GM12878 (cell line): ENCODE measurements at regions of chr4 and their contacts with region 1.

Region 1: DNA sequence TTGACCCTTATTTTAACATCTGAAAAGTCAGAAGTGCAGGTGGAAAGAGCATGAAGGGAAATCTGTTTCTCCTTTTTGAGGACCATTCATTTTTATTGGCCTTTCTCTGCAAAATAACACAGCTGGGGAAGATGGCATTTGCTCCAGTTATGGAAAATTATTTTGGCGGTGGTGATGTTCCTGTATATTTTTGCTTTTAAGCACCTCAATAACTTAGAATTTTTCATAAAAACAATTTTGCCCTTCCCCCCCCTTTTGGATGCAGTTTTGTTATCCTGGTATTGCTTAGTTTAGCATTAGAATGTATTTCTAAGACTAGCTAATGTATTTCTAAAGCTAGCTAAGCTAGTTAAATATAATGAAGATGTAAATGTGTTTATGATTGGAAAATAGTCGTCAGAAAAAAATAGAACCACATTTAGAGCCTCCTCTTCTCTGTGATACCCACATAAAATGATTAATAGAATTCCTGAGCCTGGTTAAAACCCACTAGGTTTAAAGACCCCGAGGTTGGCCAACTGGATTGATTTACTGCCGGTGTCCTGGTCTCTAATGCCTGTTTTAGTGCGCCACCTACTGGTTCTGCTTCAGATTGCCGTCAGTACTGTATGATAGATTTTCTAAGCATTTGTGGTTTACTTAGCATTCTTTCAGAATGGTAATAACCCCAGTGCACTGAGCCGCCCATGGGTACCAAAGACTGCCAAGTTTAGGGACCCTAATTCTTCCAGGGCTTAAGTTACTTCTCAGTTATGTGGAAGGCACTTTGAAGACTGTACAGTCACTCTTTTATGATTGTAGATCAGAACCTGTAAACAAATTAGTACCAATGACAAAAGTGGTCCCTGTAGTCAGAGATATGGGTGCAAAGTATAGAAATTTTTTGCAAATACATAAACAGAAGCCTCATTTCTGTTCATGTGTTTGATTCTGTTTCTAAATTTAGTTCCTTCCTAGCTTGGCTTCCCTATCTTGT is 11.4 kb downstream of the KLF3 start:
- DNase-seq: no peak
- ATAC-seq: peak; percentile 81
- H3K4me3 ChIP-seq: no peak overlapping the region
- H3K27ac ChIP-seq: no peak overlapping the region
- H3K4me1 ChIP-seq: peaks cover 47% of the 10 kb centered on the region
- H3K27me3 ChIP-seq: no peaks in the 10 kb centered on the region; a peak in 1 of 4 replicates
- CTCF ChIP-seq: peak; percentile 80 to 96 (median 89)
- EP300 ChIP-seq: peak in 1 of 2 experiments; percentile 36; a peak in 1 of 4 replicates
- POLR2A ChIP-seq: no peak
- RAD21 ChIP-seq: peak; percentile 100

Region 2: DNA sequence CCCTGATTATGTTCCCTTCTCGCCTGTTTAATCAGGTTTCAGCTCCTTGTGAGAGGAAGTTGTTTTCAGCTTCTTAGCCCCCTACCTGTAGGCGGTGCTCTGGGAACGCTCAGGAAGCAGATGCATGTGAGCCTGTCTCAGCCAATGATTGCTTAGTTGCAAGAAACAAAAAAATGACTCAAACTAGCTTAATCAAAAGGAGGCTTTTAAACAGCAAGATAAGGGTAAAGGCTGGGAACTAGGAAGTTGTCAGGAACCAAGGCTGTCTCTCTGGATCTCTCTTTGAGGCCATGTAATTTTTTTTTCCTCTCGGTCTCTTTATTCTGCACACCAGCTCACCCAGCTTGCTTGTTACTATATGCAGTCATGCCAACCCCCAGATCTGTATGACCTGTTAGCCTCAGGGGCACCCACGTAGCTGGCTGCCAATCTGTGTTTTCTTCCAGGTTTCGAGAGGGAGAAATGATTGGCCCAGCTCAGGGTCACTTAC is 606.1 kb before region 1 on chr4:
- CTCF ChIA-PET with region 1: interaction called, 37 read pairs
- POLR2A ChIA-PET with region 1: interaction called, 3 read pairs
- RAD21 ChIA-PET with region 1: interaction called, 63 read pairs
- SMC1A ChIA-PET with region 1: interaction called, 41 read pairs
- in situ Hi-C with region 1: loop called (anchors 5 kb)
- intact Hi-C with region 1: no loop called
- DNase-seq: no peak
- ATAC-seq: peak; percentile 63
- H3K4me3 ChIP-seq: no peak overlapping the region
- H3K27ac ChIP-seq: peak overlapping the region; percentile 22
- H3K4me1 ChIP-seq: peaks cover 19% of the 10 kb centered on the region
- H3K27me3 ChIP-seq: no peaks in the 10 kb centered on the region
- CTCF ChIP-seq: peak; percentile 48 to 79 (median 67); a peak in 5 of 6 replicates
- EP300 ChIP-seq: no peak
- POLR2A ChIP-seq: no peak
- RAD21 ChIP-seq: peak; percentile 92

Region 3: DNA sequence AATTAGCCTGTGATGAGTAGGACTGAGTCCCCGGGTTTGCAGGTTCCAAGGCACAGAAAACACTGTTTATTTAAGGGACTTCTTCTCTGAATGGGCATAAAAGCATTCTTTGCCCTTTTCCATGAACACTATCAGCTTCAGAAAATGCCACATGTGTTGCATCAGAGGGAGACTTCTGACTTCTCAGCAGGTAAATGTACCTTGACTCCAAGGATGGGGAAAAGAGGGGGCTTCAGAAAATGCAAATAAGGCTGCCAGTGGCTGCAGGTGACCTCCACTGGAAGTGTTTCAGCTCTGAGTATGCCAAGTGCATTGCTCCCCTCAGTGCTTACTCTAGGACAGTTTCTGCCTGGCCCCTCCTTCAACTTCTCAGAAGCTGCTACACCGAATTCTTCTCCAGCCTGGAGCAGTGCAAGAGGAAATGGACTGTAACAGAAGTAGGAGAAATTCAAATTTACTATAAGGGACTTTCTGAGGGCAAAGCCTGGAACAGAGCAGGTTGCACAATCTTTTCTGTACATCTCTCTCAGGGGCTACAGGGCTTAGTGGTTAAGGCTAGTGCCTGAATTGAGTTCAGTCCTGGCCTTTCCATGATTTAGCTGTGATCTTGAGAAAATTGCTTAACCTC is 482.1 kb before region 1 on chr4:
- CTCF ChIA-PET with region 1: interaction called, 7 read pairs
- POLR2A ChIA-PET with region 1: no interaction called
- RAD21 ChIA-PET with region 1: interaction called, 4 read pairs
- SMC1A ChIA-PET with region 1: interaction called, 14 read pairs
- in situ Hi-C with region 1: no loop called
- intact Hi-C with region 1: no loop called
- DNase-seq: no peak
- ATAC-seq: no peak
- H3K4me3 ChIP-seq: no peak overlapping the region
- H3K27ac ChIP-seq: no peak overlapping the region
- H3K4me1 ChIP-seq: no peaks in the 10 kb centered on the region; the same call in 1 of the 2 replicates
- H3K27me3 ChIP-seq: peaks cover 0 to 1% of the 10 kb centered on the region in 2 experiments; a peak in 2 of 4 replicates
- CTCF ChIP-seq: no peak
- EP300 ChIP-seq: no peak
- POLR2A ChIP-seq: no peak
- RAD21 ChIP-seq: no peak

Region 4: GRCh38 chr4:38319456-38320342 is 355.7 kb before region 1 on chr4:
- CTCF ChIA-PET with region 1: interaction called, 111 read pairs
- POLR2A ChIA-PET with region 1: interaction called, 10 read pairs
- RAD21 ChIA-PET with region 1: interaction called, 102 read pairs
- SMC1A ChIA-PET with region 1: interaction called, 113 read pairs
- in situ Hi-C with region 1: loop called (anchors 5 kb)
- intact Hi-C with region 1: loop called (anchors 1 kb)
- DNase-seq: peak; percentile 74
- ATAC-seq: peak; percentile 80
- H3K4me3 ChIP-seq: peak overlapping the region; percentile 47
- H3K27ac ChIP-seq: peak overlapping the region; percentile 91
- H3K4me1 ChIP-seq: peaks cover 27% of the 10 kb centered on the region
- H3K27me3 ChIP-seq: no peaks in the 10 kb centered on the region
- CTCF ChIP-seq: peak; percentile 93 to 99 (median 99)
- EP300 ChIP-seq: no peak
- POLR2A ChIP-seq: no peak
- RAD21 ChIP-seq: peak; percentile 99

Region 5: DNA sequence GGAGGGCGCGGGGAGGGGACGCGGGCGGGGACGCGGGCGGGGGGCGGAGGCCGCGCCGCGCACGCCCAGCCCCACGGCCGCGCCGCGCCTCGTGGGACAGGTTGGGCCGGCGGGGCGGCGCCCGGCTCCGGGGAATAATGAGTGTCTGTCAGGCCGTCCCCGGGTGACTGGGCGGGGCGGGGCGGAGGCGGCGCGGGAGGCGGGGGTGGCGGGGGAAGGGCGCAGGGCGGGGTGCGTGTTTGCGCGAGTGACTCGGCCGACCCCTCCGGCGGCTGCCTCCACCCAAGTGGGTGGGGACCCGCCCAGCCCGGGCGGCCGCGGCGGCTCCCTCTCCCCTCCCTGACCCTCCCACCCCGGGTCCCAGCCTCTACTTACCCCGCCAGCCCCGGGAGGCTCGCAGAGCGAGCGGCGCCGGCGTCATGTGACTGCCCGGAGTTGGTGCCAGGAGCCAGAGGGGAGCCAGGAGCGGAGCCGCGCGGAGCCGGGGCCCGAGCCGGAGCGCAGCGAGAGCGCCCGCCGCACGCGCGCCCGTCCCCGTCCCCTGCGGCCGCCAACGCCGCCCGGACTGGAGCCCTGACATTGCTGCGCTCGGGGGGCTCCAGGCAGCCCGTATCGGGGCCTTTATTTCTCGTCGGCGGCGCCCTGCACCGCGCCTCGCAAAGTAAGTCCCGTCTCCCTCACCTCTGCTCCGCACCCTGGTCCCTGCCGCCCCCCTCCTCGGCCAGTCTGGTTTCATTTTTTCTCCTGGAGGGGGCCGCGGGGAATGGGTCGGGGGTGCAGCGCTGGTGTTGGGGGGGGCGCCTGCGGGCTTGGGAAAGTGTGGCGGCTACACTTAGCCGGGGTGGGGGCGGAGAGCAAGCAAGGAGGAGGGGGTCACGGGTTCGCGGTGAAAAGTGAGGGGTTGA is 11.4 kb before region 1 on chr4 and contains the start of gene KLF3:
- CTCF ChIA-PET with region 1: interaction called, 24 read pairs
- POLR2A ChIA-PET with region 1: no interaction called
- RAD21 ChIA-PET with region 1: interaction called, 15 read pairs
- SMC1A ChIA-PET with region 1: interaction called, 26 read pairs
- in situ Hi-C with region 1: no loop called
- intact Hi-C with region 1: no loop called
- DNase-seq: no peak
- ATAC-seq: peak; percentile 73
- H3K4me3 ChIP-seq: peak within 1 kb of the TSS; percentile 78
- H3K27ac ChIP-seq: peak within 1 kb of the TSS; percentile 68
- H3K4me1 ChIP-seq: peaks cover 12% of the 10 kb centered on the region
- H3K27me3 ChIP-seq: peaks cover 0 to 4% of the 10 kb centered on the region in 2 experiments; a peak in 1 of 4 replicates
- CTCF ChIP-seq: no peak
- EP300 ChIP-seq: no peak
- POLR2A ChIP-seq: peak; percentile 67
- RAD21 ChIP-seq: no peak
- polyA plus RNA-seq, gene KLF3: 1.4 to 1.5 TPM

Region 6: DNA sequence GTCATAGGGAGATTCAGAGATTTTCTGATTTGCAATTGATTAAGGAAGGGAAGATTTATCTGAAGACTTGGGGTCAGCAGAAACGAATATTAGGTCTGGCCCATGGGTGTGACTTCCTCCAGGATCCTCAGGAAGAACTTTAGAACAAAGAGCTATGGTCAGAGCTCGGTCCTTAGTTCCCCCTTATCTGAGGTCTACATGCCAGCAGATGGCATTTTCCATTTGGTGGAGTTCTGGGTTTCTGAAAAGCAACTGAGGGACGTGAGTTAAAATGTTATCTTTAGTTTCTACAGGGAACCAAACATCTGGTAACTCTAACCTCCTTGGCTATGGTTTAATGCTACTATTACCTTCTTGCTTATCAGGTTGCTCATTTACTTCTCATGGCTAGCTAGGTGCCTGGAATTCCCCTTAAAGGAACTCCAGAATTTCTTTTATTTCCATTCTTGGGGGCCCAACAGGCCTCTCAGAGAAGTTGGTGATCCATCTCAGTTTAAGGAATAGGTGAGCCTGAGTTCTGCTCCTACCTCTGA is 29.3 kb after region 1 on chr4:
- CTCF ChIA-PET with region 1: interaction called, 10 read pairs
- POLR2A ChIA-PET with region 1: no interaction called
- RAD21 ChIA-PET with region 1: interaction called, 4 read pairs
- SMC1A ChIA-PET with region 1: interaction called, 4 read pairs
- in situ Hi-C with region 1: no loop called
- intact Hi-C with region 1: no loop called
- DNase-seq: no peak
- ATAC-seq: no peak
- H3K4me3 ChIP-seq: no peak overlapping the region
- H3K27ac ChIP-seq: no peak overlapping the region
- H3K4me1 ChIP-seq: peaks cover 5% of the 10 kb centered on the region
- H3K27me3 ChIP-seq: no peaks in the 10 kb centered on the region; a peak in 1 of 4 replicates
- CTCF ChIP-seq: no peak
- EP300 ChIP-seq: no peak
- POLR2A ChIP-seq: no peak
- RAD21 ChIP-seq: no peak